ENCODE measurements at regions of chr19 and their contacts with region 1.

Region 1: GRCh38 chr19:39546599-39546998 is 6.6 kb upstream of the EID2 start:
- H3K4me3 ChIP-seq: no peak overlapping the region
- H3K27ac ChIP-seq: no peak overlapping the region
- H3K4me1 ChIP-seq: peaks cover 3% of the 10 kb centered on the region; the same call in 1 of the 2 replicates
- CTCF ChIP-seq: no peak

Region 2: GRCh38 chr19:39187559-39187957 is 359.0 kb before region 1 on chr19:
- CTCF ChIA-PET with region 1: no interaction called
- POLR2A ChIA-PET with region 1: no interaction called
- H3K4me3 ChIP-seq: no peak overlapping the region
- H3K27ac ChIP-seq: 0 out of 2 replicates have a peak overlapping the region, but pooled peaks have one; percentile 24
- H3K4me1 ChIP-seq: 0 out of 2 replicates have a peak, but pooled peaks cover 4% of the 10 kb centered on the region
- CTCF ChIP-seq: no peak

Region 3: GRCh38 chr19:39532233-39533002 is 14.2 kb before region 1 on chr19 and contains the start of gene EID2B:
- CTCF ChIA-PET with region 1: interaction called, 37 read pairs
- POLR2A ChIA-PET with region 1: interaction called, 4 read pairs
- H3K4me3 ChIP-seq: peak within 1 kb of the TSS; percentile 88
- H3K27ac ChIP-seq: peak within 1 kb of the TSS; percentile 85
- H3K4me1 ChIP-seq: peaks cover 20% of the 10 kb centered on the region
- CTCF ChIP-seq: peak; percentile 100

Region 4: GRCh38 chr19:39557441-39558151 is 11.0 kb after region 1 on chr19:
- CTCF ChIA-PET with region 1: interaction called, 41 read pairs
- POLR2A ChIA-PET with region 1: no interaction called
- H3K4me3 ChIP-seq: no peak overlapping the region
- H3K27ac ChIP-seq: no peak overlapping the region
- H3K4me1 ChIP-seq: peaks cover 28% of the 10 kb centered on the region
- CTCF ChIP-seq: no peak

Region 5: GRCh38 chr19:39679056-39679790 is 132.6 kb after region 1 on chr19:
- CTCF ChIA-PET with region 1: interaction called, 148 read pairs
- POLR2A ChIA-PET with region 1: no interaction called
- H3K4me3 ChIP-seq: no peak overlapping the region
- H3K27ac ChIP-seq: no peak overlapping the region
- H3K4me1 ChIP-seq: peaks cover 5% of the 10 kb centered on the region; the same call in 1 of the 2 replicates
- CTCF ChIP-seq: no peak